ENCODE measurements at regions of chr3 and their contacts with region 1.

Region 1: GRCh38 chr3:179015551-179016020 is 56.0 kb downstream of the ZMAT3 start:
- DNase-seq: no peak

Region 2: GRCh38 chr3:178690571-178690970 is 325.0 kb before region 1 on chr3:
- intact Hi-C with region 1: no loop called
- DNase-seq: no peak

Region 3: GRCh38 chr3:178969004-178969700 is 46.4 kb before region 1 on chr3:
- intact Hi-C with region 1: no loop called
- DNase-seq: no peak

Region 4: GRCh38 chr3:179071550-179072397 is 56.2 kb after region 1 on chr3 and contains the start of gene ZMAT3:
- intact Hi-C with region 1: loop called (anchors 5 kb)
- DNase-seq: peak; percentile 95
- total RNA-seq, gene ZMAT3: 18.3 TPM

Region 5: GRCh38 chr3:179100652-179101051 is 85.1 kb after region 1 on chr3:
- intact Hi-C with region 1: loop called (anchors 5 kb)
- DNase-seq: no peak

Region 6: GRCh38 chr3:179653096-179653797 is 637.7 kb after region 1 on chr3:
- intact Hi-C with region 1: no loop called
- DNase-seq: peak; percentile 88

Measured in cardiac septum (tissue), 1 donor.